Psoas muscle (tissue), 8 donors: ENCODE measurements at regions of chr2 and their contacts with region 1.

Region 1: DNA sequence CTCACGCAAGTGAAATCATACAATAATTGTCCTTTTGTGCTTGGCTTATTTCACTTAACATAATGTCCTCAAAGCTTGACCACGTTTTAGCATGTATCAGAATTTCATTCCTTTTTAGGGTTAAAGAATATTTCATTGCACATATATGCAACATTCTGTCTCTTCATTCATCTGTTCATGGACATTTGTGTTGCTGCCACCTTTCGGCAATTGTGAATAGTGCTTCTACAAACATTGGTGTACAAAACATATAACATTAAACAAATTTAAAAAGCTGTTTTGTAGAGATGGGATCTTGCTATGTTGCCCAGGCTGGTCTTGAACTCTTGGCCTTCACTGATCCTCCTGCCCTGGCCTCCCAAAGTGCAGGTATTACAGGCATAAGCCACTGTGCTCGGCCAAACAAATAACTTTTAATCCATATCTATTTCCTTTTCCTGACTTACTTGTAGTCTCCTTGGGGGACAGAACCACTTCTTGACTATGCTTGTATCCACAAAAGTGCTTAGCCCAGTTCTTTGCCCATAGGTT is 209.3 kb downstream of the SLC4A3 start:
- DNase-seq: no peak
- ATAC-seq: no peak
- H3K4me3 ChIP-seq: no peak overlapping the region
- H3K27ac ChIP-seq: no peak overlapping the region
- H3K4me1 ChIP-seq: no peaks in the 10 kb centered on the region
- H3K27me3 ChIP-seq: no peaks in the 10 kb centered on the region
- CTCF ChIP-seq: peak; percentile 35

Region 2: DNA sequence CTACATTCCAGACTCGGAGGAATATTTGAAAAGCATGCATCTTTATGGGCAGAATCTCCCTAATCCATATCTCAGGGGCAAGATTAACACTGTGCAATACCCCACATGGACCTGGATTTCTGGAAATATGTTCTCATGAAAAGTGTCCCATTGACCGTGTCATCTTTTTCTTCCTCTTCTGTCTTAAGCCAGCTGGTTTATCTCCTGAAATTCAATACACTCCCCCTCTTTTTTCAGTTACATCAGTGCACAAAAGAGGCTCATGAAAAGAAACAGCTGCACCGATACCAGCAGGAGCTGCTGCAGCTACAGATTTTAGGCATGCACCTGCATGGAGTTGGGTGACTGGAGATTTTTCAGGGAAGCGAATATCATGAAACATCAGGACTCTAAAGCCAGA is 92.1 kb before region 1 on chr2:
- intact Hi-C with region 1: loop called (anchors 5 to 10 kb)
- DNase-seq: no peak
- ATAC-seq: no peak
- H3K4me3 ChIP-seq: no peak overlapping the region
- H3K27ac ChIP-seq: no peak overlapping the region
- H3K4me1 ChIP-seq: no peaks in the 10 kb centered on the region
- H3K27me3 ChIP-seq: no peaks in the 10 kb centered on the region
- CTCF ChIP-seq: no peak

Region 3: GRCh38 chr2:220053919-220054318 is 217.2 kb after region 1 on chr2:
- intact Hi-C with region 1: no loop called
- DNase-seq: no peak
- ATAC-seq: no peak
- H3K4me3 ChIP-seq: no peak overlapping the region
- H3K27ac ChIP-seq: no peak overlapping the region
- H3K4me1 ChIP-seq: no peaks in the 10 kb centered on the region
- H3K27me3 ChIP-seq: no peaks in the 10 kb centered on the region
- CTCF ChIP-seq: no peak